CD8-positive, alpha-beta T cell (primary cell): ENCODE measurements at regions of chr5 and their contacts with region 1.

Region 1: DNA sequence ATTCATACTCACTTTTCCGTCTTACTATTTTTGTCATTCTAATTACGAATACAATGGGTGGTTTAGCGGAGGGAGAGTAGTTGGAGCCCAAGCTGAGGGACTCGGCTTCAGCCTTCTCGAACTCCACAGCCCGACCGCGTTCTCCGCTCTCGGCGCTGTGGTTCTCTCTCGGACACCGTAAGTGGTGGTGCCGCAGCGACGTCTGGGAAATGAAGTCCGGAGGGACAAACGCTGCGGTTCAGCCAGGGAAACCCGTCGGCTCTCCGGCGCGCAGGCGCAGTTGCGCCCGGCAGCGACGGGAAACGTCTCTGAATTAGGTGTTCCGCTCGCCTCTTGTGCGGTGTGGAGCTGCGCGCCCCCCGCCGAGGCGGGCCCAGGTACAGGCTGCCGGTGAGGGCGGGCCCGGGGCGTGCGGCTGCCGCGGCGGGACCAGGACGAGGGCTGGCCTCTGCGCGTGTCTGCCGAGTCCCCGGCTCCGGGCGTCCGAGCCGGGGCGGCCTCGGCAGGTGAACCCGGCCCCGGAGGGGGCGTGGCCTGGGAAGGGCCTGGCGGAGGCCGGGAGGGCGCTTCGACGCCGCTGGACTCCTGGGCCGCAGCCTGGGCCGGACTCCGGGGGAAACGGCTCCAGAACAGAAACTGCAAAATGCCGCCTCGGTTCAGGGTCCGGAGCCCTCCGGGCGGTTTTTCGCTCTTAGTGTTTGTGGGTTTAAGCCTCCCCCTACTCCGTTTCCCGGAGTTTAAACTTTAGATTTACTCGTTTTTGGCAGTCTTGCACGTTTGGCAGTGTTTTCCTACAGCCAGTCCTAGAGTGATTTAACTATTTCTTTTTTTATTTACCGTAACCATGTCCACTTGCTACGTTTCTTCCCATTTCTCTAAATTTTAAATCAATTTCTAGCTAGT is at the start of gene ZNF879:
- DNase-seq: peak; percentile 86 to 97 (median 94)
- ATAC-seq: peak; percentile 92
- H3K4me3 ChIP-seq: peak within 1 kb of the TSS; percentile 51 to 70
- H3K4me3 Mint-ChIP-seq: peak within 1 kb of the TSS; percentile 96
- H3K27ac ChIP-seq: peak within 1 kb of the TSS; percentile 50 to 59
- H3K27ac Mint-ChIP-seq: peak within 1 kb of the TSS; percentile 82
- H3K4me1 ChIP-seq: peaks cover 9% of the 10 kb centered on the region
- H3K4me1 Mint-ChIP-seq: peaks cover 17% of the 10 kb centered on the region
- H3K27me3 ChIP-seq: no peaks in the 10 kb centered on the region
- H3K27me3 Mint-ChIP-seq: peaks cover 7% of the 10 kb centered on the region
- CTCF ChIP-seq: no peak
- total RNA-seq, gene ZNF879: 4.5 to 5.8 TPM

Region 2: DNA sequence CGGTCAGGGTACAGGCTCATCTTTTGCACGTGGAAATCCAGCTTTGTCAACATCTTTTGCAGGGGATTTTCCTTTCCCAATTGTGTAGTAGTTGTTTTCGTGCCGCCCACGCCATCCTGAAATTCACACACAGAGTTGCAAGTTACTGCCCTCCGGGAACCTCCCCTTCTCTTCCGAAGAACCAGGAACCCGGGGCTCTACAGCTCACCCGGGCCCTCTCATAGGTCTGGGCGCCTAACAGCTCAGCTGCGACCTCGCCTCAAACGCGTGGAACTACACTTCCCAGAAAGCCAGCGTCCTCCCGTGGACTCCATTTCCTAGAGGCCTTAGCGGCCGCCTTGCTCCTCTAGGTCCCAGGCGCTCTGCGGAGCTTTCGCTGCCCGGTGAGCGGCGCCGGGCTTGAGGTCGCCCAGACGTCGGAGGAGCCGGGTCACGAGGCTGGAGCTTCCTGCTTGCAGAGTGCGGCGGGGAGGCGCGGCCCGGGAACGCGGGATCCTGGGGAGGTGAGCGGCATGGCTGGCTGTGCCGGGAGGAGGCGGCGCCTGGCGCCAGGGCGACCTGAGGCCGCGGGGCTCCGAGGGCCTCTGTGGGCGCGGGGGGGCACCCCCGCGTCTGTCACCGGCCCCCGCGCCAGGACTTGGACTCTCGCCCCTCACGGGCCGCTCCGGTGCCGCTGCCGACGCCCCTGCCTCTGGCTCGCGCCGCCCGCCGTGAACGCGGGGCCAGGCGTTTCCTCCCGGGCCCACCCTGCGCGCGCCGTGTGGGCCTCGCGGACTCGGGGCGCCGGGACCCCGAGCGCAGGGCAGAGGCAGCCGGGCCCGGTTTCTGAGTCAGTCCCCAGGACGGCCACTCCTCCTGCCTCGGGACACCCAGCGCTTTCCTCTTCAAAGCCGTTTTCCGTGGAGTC is 163.9 kb before region 1 on chr5 and contains the start of gene ZNF354B:
- CTCF ChIA-PET with region 1: no interaction called
- POLR2A ChIA-PET with region 1: no interaction called
- intact Hi-C with region 1: loop called (anchors 1 kb)
- DNase-seq: peak; percentile 54 to 93 (median 81)
- ATAC-seq: peak; percentile 96
- H3K4me3 ChIP-seq: peak within 1 kb of the TSS; percentile 60 to 95
- H3K4me3 Mint-ChIP-seq: peak within 1 kb of the TSS; percentile 90
- H3K27ac ChIP-seq: peak within 1 kb of the TSS; percentile 34 to 55
- H3K27ac Mint-ChIP-seq: peak within 1 kb of the TSS; percentile 90
- H3K4me1 ChIP-seq: peaks cover 15% of the 10 kb centered on the region
- H3K4me1 Mint-ChIP-seq: peaks cover 31% of the 10 kb centered on the region
- H3K27me3 ChIP-seq: no peaks in the 10 kb centered on the region
- H3K27me3 Mint-ChIP-seq: no peaks in the 10 kb centered on the region
- CTCF ChIP-seq: no peak
- total RNA-seq, gene ZNF354B: 4.6 to 6.1 TPM

Region 3: DNA sequence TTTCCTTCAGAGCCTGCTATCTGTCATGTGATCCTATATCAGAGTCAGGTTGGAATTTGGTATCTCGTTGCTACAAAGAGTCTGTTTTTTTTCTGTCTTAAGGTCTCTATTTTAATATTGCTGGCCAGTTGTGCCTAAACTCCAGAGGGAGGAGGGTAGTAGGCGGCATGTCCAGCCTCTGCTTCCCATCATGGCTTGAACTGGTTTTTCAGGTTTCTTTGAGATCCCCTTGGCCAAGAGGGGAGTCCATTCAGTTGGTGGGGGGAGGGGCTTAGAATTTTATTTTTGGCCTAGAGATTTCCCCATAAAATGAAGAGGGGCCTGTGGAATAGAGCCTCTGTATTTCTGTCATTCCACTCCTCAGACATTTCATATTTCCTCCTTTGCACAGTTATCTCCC is 21.0 kb after region 1 on chr5:
- CTCF ChIA-PET with region 1: no interaction called
- POLR2A ChIA-PET with region 1: no interaction called
- intact Hi-C with region 1: no loop called
- DNase-seq: no peak
- ATAC-seq: no peak
- H3K4me3 ChIP-seq: no peak overlapping the region
- H3K4me3 Mint-ChIP-seq: no peak overlapping the region
- H3K27ac ChIP-seq: no peak overlapping the region
- H3K27ac Mint-ChIP-seq: no peak overlapping the region
- H3K4me1 ChIP-seq: no peaks in the 10 kb centered on the region
- H3K4me1 Mint-ChIP-seq: no peaks in the 10 kb centered on the region
- H3K27me3 ChIP-seq: peaks cover 0 to 2% of the 10 kb centered on the region in 2 experiments
- H3K27me3 Mint-ChIP-seq: peaks cover 4% of the 10 kb centered on the region
- CTCF ChIP-seq: no peak

Region 4: GRCh38 chr5:179060116-179061008 is 36.6 kb after region 1 on chr5 and contains the start of gene ZNF354C:
- CTCF ChIA-PET with region 1: interaction called, 3 read pairs
- POLR2A ChIA-PET with region 1: interaction called, 9 read pairs
- intact Hi-C with region 1: loop called (anchors 1 kb)
- DNase-seq: peak; percentile 64 to 92 (median 88)
- ATAC-seq: peak; percentile 98
- H3K4me3 ChIP-seq: peak within 1 kb of the TSS; percentile 76 to 80
- H3K4me3 Mint-ChIP-seq: peak within 1 kb of the TSS; percentile 95
- H3K27ac ChIP-seq: peak within 1 kb of the TSS; percentile 64 to 76
- H3K27ac Mint-ChIP-seq: peak within 1 kb of the TSS; percentile 92
- H3K4me1 ChIP-seq: peaks cover 15% of the 10 kb centered on the region
- H3K4me1 Mint-ChIP-seq: peaks cover 30% of the 10 kb centered on the region
- H3K27me3 ChIP-seq: no peaks in the 10 kb centered on the region
- H3K27me3 Mint-ChIP-seq: peaks cover 8% of the 10 kb centered on the region
- CTCF ChIP-seq: no peak
- total RNA-seq, gene ZNF354C: 2.4 to 2.7 TPM